ENCODE measurements at regions of chr19 and their contacts with region 1.

Region 1: GRCh38 chr19:55605207-55605636 is 225 bp upstream of the ZNF865 start:
- H3K4me3 ChIP-seq: peak overlapping the region; percentile 97
- H3K27ac ChIP-seq: peak overlapping the region; percentile 88; the same call in 1 of the 2 replicates
- H3K4me1 ChIP-seq: peaks cover 8% of the 10 kb centered on the region; the same call in 1 of the 2 replicates
- CTCF ChIP-seq: no peak

Region 2: GRCh38 chr19:55476100-55476775 is 129.0 kb before region 1 on chr19 and contains the start of gene ZNF628:
- CTCF ChIA-PET with region 1: interaction called, 6 read pairs
- POLR2A ChIA-PET with region 1: interaction called, 17 read pairs
- H3K4me3 ChIP-seq: peak within 1 kb of the TSS; percentile 68
- H3K27ac ChIP-seq: peak within 1 kb of the TSS; percentile 76
- H3K4me1 ChIP-seq: peaks cover 8% of the 10 kb centered on the region; the same call in 1 of the 2 replicates
- CTCF ChIP-seq: no peak

Region 3: DNA sequence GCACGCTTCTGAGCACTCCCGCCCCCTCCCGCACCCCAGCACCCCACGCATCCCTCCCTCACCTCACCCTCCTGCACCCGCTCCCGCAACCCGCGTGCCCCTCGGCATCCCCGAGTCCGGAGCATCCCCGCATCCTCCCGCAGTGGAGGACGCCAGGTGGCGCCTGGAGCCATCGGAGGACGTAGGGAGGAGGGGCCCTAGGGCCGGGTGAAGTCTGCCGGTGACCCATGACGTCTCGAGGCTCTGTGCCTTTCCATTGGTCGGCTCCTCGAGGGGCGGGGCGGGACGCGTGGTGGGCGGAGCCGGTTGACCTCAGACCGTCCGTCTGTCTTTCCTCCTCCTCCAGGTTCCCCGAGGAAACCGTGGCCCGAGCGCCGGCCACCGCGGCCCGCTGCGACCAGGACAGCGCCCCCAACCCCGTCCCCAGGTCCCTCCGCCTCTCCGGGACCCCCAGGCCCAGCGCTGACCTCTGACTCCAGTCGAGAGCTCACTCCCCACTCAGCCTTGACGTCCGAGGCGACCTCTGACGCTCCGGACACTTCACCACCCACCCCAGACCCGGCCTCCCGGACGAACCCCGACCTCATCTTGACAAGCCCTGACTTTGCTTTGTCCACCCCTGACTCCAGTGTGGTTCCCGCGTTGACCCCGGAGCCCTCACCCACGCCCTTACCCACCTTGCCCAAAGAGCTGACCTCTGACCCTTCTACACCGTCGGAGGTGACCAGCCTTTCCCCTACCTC is 88.2 kb before region 1 on chr19:
- CTCF ChIA-PET with region 1: interaction called, 50 read pairs
- POLR2A ChIA-PET with region 1: interaction called, 5 read pairs
- H3K4me3 ChIP-seq: peak overlapping the region; percentile 37
- H3K27ac ChIP-seq: no peak overlapping the region
- H3K4me1 ChIP-seq: no peaks in the 10 kb centered on the region
- CTCF ChIP-seq: peak; percentile 97

Region 4: GRCh38 chr19:55586976-55587668 is 18.1 kb before region 1 on chr19:
- CTCF ChIA-PET with region 1: interaction called, 8 read pairs
- POLR2A ChIA-PET with region 1: interaction called, 71 read pairs
- H3K4me3 ChIP-seq: peak overlapping the region; percentile 48
- H3K27ac ChIP-seq: no peak overlapping the region
- H3K4me1 ChIP-seq: peaks cover 11% of the 10 kb centered on the region
- CTCF ChIP-seq: no peak

Region 5: GRCh38 chr19:55624109-55625003 is 19.1 kb after region 1 on chr19 and contains the start of gene ZNF784:
- CTCF ChIA-PET with region 1: interaction called, 29 read pairs
- POLR2A ChIA-PET with region 1: interaction called, 75 read pairs
- H3K4me3 ChIP-seq: peak within 1 kb of the TSS; percentile 88
- H3K27ac ChIP-seq: peak within 1 kb of the TSS; percentile 87
- H3K4me1 ChIP-seq: peaks cover 5% of the 10 kb centered on the region
- CTCF ChIP-seq: no peak

Region 6: GRCh38 chr19:55738302-55738701 is 133.1 kb after region 1 on chr19 and contains the start of gene NLRP9:
- CTCF ChIA-PET with region 1: no interaction called
- POLR2A ChIA-PET with region 1: no interaction called
- H3K4me3 ChIP-seq: no peak within 1 kb of the TSS
- H3K27ac ChIP-seq: no peak within 1 kb of the TSS
- H3K4me1 ChIP-seq: no peaks in the 10 kb centered on the region
- CTCF ChIP-seq: no peak